ENCODE measurements at regions of chr1 and their contacts with region 1.

Region 1: DNA sequence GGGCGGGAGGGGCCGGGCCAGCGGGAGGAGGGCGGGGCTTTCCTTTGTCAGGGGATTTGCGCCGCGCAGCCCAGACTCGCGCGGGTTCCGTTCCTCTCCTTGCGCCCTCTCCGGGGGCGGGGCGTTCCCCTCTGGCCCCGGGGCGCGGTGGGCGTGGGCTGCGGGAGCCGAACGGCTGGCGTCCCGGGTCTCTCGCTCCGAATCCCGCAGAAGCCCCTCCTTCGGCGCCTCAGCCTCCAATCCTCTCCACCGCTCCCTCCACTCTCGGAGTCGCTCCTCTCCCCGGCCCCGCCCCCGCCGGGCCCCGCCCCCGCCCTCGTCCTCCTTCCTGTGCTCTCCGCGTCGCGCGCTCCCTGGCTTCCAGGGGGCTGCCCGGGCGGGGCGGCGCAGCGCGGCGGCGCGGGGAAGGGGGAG is 82.8 kb upstream of the BMP8A start:
- DNase-seq: peak; percentile 98
- H3K4me3 ChIP-seq: peak overlapping the region; percentile 63 to 87 (median 84)
- H3K27ac ChIP-seq: peak overlapping the region; percentile 92 to 98 (median 96)
- H3K4me1 ChIP-seq: peaks cover 0 to 90% (median 81%) of the 10 kb centered on the region in 4 donors
- H3K27me3 ChIP-seq: no peaks in the 10 kb centered on the region
- CTCF ChIP-seq: no peak
- EP300 ChIP-seq: no peak
- POLR2A ChIP-seq: no peak

Region 2: DNA sequence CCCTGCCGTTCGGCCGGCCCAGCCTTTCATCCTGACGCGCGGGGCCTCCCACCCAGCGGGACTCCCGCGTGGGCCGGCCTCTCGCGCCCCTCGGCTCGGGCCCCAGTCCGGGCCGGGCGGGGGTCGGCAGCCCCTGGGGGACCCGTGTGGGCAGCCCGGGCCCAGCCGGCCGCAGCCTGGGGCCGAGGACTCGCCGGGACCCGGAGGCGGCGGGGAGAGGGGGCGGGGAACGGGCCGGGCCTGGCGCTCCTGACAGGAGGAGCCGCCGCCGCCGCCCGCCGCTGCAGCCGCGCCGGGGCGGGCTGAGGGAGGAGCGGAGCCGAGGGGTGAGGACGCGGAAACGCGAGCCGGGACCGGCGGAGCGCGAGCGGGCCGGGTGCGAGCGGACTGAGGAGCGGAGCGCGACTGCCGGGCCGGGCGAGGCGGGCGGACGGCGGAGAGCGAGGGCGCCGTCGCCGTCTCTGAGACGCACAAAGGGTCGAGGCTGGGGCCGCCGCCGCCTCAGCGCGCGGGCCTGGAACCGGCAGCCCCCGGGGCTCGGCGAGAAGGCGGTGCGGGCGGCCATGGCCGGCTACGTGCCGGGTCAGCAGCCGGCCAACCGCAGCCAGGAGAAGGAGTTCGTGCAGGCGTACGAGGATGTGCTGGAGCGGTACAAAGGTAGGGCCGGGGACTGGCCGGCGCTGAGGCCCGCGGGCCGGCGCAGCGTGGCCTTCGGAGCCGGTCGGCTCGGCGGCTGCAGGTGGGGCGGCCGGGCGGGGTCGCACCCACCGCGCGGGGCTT is 303.4 kb before region 1 on chr1:
- intact Hi-C with region 1: loop called (anchors 5 kb)
- DNase-seq: peak; percentile 90
- H3K4me3 ChIP-seq: peak overlapping the region; percentile 51 to 99 (median 92)
- H3K27ac ChIP-seq: peak overlapping the region; percentile 94 to 99 (median 97)
- H3K4me1 ChIP-seq: peaks cover 0 to 64% (median 58%) of the 10 kb centered on the region in 4 donors
- H3K27me3 ChIP-seq: no peaks in the 10 kb centered on the region
- CTCF ChIP-seq: no peak
- EP300 ChIP-seq: no peak
- POLR2A ChIP-seq: no peak

Region 3: DNA sequence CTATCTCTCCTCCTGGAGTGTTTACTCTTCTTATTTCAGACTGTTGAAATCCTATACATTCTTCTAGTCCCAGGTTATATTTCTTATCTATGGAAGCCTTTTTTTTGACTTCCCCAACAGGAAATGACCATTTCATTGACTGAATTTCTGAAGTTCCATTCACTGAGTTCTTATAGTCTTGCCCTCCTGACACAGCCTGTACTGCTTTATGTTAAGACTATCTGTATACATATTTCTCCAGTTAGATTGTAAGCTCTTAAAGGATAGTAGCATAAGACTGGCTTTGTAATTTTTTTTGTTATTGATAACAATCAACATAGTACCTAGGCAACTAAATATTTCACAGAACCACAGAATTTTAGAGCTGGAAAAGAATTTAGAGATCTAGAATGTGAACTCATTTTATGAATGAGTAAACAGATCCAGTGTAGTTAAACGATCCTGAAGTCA is 219.0 kb before region 1 on chr1:
- intact Hi-C with region 1: loop called (anchors 5 kb)
- DNase-seq: no peak
- H3K4me3 ChIP-seq: no peak overlapping the region
- H3K27ac ChIP-seq: peak overlapping the region; percentile 83 to 95 (median 90)
- H3K4me1 ChIP-seq: peaks cover 0 to 78% (median 64%) of the 10 kb centered on the region in 4 donors
- H3K27me3 ChIP-seq: no peaks in the 10 kb centered on the region
- CTCF ChIP-seq: no peak
- EP300 ChIP-seq: no peak
- POLR2A ChIP-seq: no peak

Region 4: DNA sequence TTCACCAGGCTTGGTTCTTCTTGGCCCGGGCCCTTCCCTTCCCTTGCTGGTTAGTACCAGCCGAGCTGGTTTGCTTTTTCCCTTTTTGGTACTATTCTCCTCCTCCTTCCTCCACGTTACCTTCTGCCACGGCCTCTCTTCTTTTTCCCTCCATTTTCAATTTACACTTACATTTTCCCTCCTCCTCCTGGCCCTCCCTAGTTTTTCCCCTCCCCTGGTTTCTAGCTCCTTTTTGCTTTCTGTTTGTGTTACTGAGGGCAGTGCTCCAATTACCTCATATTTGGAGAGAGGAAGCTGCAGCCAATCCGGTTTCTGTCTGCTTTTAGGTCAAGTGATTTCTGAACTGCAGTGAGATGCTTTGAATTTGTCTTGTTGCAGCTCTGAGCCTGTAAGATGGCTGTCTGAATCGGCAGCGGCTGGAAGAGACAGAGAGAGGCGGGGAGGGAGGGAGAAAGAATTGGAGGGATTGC is 140.5 kb before region 1 on chr1:
- intact Hi-C with region 1: loop called (anchors 5 kb)
- DNase-seq: peak; percentile 85
- H3K4me3 ChIP-seq: peak overlapping the region; percentile 18 to 48 (median 41)
- H3K27ac ChIP-seq: peak overlapping the region; percentile 81 to 88 (median 88)
- H3K4me1 ChIP-seq: peaks cover 0 to 82% (median 77%) of the 10 kb centered on the region in 4 donors
- H3K27me3 ChIP-seq: no peaks in the 10 kb centered on the region
- CTCF ChIP-seq: no peak
- EP300 ChIP-seq: no peak
- POLR2A ChIP-seq: peak; percentile 38 to 67

Region 5: DNA sequence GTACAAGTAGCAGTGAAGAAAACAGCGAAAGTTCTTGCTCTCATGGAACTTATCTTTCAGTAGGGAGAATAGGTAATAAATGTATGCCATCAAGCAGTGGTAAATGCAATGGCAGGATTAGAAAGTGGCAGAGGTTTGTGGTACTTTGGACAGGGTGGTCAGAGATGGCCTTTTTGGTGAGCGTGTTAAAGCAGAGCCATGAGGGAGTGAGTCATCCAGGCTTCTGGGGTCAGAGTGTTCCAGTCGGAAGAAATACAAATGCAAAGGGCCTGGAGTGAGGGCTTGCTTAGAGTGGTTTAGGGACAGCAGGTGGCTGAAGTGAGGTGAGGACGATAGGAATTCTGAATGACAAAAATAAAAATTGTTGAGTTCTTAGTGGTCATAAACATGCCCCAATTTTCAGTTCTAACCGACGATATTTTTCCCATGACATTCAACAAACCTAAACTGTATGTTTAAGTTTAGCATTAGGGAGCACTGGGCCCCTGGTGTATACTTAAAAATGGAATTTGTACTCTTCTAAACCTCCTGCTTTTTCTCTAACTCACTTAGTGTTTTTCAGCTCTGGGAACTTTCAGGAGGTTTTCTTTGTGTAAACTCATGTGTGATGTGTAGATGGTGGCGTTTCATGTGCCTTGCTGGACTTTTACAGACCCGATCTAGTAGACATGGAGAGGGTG is 126.0 kb before region 1 on chr1:
- intact Hi-C with region 1: loop called (anchors 5 kb)
- DNase-seq: peak; percentile 72
- H3K4me3 ChIP-seq: no peak overlapping the region
- H3K27ac ChIP-seq: peak overlapping the region in 3 of 4 donors; percentile 57 to 77 (median 76)
- H3K4me1 ChIP-seq: peaks cover 0 to 65% (median 41%) of the 10 kb centered on the region in 4 donors
- H3K27me3 ChIP-seq: no peaks in the 10 kb centered on the region
- CTCF ChIP-seq: no peak
- EP300 ChIP-seq: no peak
- POLR2A ChIP-seq: no peak

Region 6: GRCh38 chr1:39359028-39359570 is 49.5 kb before region 1 on chr1:
- intact Hi-C with region 1: loop called (anchors 5 kb)
- DNase-seq: peak; percentile 72
- H3K4me3 ChIP-seq: no peak overlapping the region
- H3K27ac ChIP-seq: peak overlapping the region; percentile 14 to 79 (median 57)
- H3K4me1 ChIP-seq: peaks cover 0 to 20% (median 19%) of the 10 kb centered on the region in 4 donors
- H3K27me3 ChIP-seq: no peaks in the 10 kb centered on the region
- CTCF ChIP-seq: no peak
- EP300 ChIP-seq: peak in 1 of 4 donors; percentile 22
- POLR2A ChIP-seq: no peak

Measured in sigmoid colon (tissue), 7 donors.